ENCODE measurements at regions of chr11 and their contacts with region 1.

Region 1: GRCh38 chr11:33869481-33870422 is 22.1 kb downstream of the LMO2 start:
- DNase-seq: peak; percentile 75
- ATAC-seq: peak; percentile 72
- H3K4me3 ChIP-seq: peak overlapping the region; percentile 64 to 86 (median 82)
- H3K4me3 Mint-ChIP-seq: peak overlapping the region; percentile 98
- H3K27ac ChIP-seq: no peak overlapping the region
- H3K27ac Mint-ChIP-seq: peak overlapping the region; percentile 83
- H3K4me1 ChIP-seq: peaks cover 26 to 30% of the 10 kb centered on the region in 2 donors
- H3K4me1 Mint-ChIP-seq: peaks cover 32% of the 10 kb centered on the region
- H3K27me3 ChIP-seq: peaks cover 0 to 7% (median 0%) of the 10 kb centered on the region in 4 experiments
- H3K27me3 Mint-ChIP-seq: peaks cover 3% of the 10 kb centered on the region
- CTCF ChIP-seq: no peak

Region 2: GRCh38 chr11:33692013-33692504 is 177.7 kb before region 1 on chr11:
- CTCF ChIA-PET with region 1: no interaction called
- POLR2A ChIA-PET with region 1: no interaction called
- intact Hi-C with region 1: no loop called
- DNase-seq: no peak
- ATAC-seq: no peak
- H3K4me3 ChIP-seq: no peak overlapping the region
- H3K4me3 Mint-ChIP-seq: no peak overlapping the region
- H3K27ac ChIP-seq: no peak overlapping the region
- H3K27ac Mint-ChIP-seq: no peak overlapping the region
- H3K4me1 ChIP-seq: peaks cover 0 to 2% of the 10 kb centered on the region in 2 donors
- H3K4me1 Mint-ChIP-seq: peaks cover 4% of the 10 kb centered on the region
- H3K27me3 ChIP-seq: peaks cover 0 to 12% (median 1%) of the 10 kb centered on the region in 4 experiments
- H3K27me3 Mint-ChIP-seq: peaks cover 13% of the 10 kb centered on the region
- CTCF ChIP-seq: no peak

Region 3: GRCh38 chr11:33716236-33716635 is 153.5 kb before region 1 on chr11:
- CTCF ChIA-PET with region 1: no interaction called
- POLR2A ChIA-PET with region 1: no interaction called
- intact Hi-C with region 1: no loop called
- DNase-seq: no peak
- ATAC-seq: no peak
- H3K4me3 ChIP-seq: no peak overlapping the region
- H3K4me3 Mint-ChIP-seq: no peak overlapping the region
- H3K27ac ChIP-seq: no peak overlapping the region
- H3K27ac Mint-ChIP-seq: no peak overlapping the region
- H3K4me1 ChIP-seq: no peaks in the 10 kb centered on the region
- H3K4me1 Mint-ChIP-seq: no peaks in the 10 kb centered on the region
- H3K27me3 ChIP-seq: no peaks in the 10 kb centered on the region
- H3K27me3 Mint-ChIP-seq: no peaks in the 10 kb centered on the region
- CTCF ChIP-seq: no peak

Region 4: DNA sequence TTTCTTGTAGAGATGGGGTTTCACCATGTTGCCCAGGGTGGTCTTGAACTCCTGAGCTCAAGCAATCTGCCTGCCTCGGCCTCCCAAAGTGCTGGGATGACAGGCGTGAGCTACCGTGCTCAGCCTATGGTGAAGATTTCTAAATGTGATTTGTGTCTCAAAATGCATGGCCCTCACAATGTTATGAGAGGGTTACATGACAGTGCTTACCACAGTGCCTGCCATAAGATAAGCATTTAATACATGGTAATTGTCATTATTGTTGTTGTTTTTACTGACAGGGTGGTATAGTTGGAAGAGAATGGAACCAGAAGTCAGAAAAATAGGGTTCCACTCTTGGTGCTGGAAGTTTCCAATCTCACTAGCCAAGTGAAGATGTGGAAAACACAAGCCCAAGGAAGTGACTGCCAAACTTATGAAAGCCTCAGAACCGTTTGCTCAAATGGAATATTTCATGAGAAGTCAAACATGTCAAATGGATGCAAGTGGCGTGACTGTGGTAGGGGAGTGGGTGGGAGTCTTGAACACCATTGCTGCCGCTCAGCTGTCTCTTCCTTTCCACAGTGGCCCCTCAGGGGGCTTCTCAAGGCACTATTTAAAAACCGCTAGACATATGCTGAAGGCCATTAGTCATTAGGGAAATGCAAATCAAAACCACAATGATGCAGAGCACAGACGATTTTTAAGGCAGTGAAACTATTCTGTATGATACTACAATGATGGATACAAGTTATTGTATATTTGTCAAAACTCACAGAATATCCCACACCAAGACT is 51.3 kb after region 1 on chr11:
- CTCF ChIA-PET with region 1: interaction called, 3 read pairs
- POLR2A ChIA-PET with region 1: no interaction called
- intact Hi-C with region 1: loop called (anchors 5 kb)
- DNase-seq: peak; percentile 74
- ATAC-seq: peak; percentile 93
- H3K4me3 ChIP-seq: no peak overlapping the region
- H3K4me3 Mint-ChIP-seq: peak overlapping the region; percentile 14
- H3K27ac ChIP-seq: no peak overlapping the region
- H3K27ac Mint-ChIP-seq: peak overlapping the region; percentile 7
- H3K4me1 ChIP-seq: peaks cover 10 to 14% of the 10 kb centered on the region in 2 donors
- H3K4me1 Mint-ChIP-seq: peaks cover 21% of the 10 kb centered on the region
- H3K27me3 ChIP-seq: peaks cover 0 to 46% (median 28%) of the 10 kb centered on the region in 4 experiments
- H3K27me3 Mint-ChIP-seq: peaks cover 60% of the 10 kb centered on the region
- CTCF ChIP-seq: no peak

Region 5: DNA sequence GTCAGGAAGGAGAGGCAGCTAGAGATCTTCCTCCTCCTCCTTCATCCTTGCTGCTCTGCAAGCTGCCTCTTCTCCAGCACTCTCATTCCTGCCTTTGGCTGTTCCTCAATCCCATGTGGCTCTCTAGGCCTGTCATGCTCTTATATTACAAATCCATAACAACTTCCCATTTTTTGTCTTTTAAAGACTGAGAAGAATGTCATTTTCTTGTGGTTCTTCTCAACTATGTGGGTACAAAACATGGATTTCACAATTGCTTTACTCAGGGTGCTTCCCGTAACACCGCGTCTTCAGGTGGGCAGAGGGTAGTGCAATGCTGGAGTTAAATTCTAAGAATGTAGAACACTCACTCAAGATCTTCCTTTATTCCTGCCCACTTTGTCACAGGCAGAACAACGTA is 562.2 kb after region 1 on chr11:
- CTCF ChIA-PET with region 1: no interaction called
- POLR2A ChIA-PET with region 1: no interaction called
- intact Hi-C with region 1: no loop called
- DNase-seq: no peak
- ATAC-seq: no peak
- H3K4me3 ChIP-seq: no peak overlapping the region
- H3K4me3 Mint-ChIP-seq: no peak overlapping the region
- H3K27ac ChIP-seq: no peak overlapping the region
- H3K27ac Mint-ChIP-seq: no peak overlapping the region
- H3K4me1 ChIP-seq: no peaks in the 10 kb centered on the region
- H3K4me1 Mint-ChIP-seq: no peaks in the 10 kb centered on the region
- H3K27me3 ChIP-seq: no peaks in the 10 kb centered on the region
- H3K27me3 Mint-ChIP-seq: no peaks in the 10 kb centered on the region
- CTCF ChIP-seq: no peak

Measured in B cell (primary cell).